Activated CD4-positive, alpha-beta T cell treated with anti-CD3 and anti-CD28 coated beads for 36 hours (primary cell): ENCODE measurements at regions of chr12 and their contacts with region 1.

Region 1: DNA sequence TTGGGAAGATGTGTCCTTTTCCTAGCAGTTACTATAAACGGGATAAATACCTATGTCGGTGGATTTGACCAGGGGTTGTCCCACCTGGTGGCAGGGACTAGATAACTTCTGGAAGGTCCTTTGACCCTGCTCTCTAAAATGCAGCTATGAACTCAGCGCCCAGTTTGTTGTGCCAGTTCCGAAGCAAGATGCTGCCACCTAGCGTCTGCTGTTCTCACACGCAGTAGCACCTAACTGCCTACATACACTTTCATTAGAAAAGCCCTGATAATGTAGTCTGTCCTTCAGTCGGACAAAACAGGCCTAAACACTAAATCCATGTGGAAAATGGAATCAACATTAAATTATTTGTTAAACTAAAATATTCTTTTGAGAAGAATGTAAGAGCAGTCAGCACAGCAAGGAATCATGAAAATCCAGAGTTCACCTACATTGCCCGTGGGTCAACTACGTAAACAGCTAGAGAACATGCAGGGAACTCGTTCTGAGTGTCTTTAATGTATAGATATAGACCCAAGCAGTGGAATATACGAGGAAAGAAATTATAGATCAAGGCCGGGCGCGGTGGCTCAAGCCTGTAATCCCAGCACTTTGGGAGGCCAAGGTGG is 51.1 kb upstream of the CRACR2A start:
- DNase-seq: peak; percentile 84
- ATAC-seq: peak; percentile 87
- H3K4me3 Mint-ChIP-seq: no peak overlapping the region
- H3K27ac Mint-ChIP-seq: no peak overlapping the region
- H3K4me1 Mint-ChIP-seq: peaks cover 13% of the 10 kb centered on the region
- H3K27me3 Mint-ChIP-seq: no peaks in the 10 kb centered on the region

Region 2: DNA sequence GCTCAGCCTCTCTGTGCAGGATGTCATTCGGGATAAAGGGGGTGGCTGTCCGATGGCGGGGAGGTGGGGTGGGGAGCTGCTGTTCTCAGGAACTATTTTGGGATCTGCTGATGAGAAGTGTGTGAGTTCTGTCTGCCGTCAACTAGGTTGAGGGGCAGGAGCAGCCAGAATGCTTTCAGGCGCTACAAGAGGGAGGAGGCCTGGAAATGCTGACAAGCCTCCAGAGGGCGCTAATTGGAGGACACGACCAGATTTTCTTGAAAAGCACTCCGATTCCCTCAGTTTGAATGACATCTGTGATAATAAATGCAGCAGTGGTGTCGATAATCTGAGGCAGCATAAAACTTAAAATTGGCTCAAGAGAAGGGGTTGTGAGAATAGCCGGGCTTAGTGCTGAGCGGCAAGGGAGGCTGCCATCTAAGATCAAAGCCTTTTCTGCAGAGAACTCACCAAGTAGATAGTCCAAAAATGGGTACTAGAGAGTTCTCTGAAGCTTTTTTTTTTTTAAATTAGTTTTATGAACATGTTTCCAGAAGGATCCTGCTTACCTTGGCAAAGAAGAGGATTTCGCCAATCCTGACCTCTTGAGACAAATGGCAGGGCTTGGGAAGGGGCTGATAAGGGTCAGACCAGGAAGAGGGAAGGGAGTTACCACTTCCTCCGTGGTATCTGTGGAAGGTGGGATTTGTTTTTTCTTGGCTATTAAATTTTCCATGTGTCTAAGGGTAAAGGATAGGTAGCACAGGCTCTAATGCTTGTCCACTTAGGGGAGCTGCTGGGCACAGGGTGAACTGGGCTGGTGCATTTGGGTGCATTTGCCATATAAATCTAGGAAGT is 145.4 kb before region 1 on chr12:
- CTCF ChIA-PET with region 1: interaction called, 9 read pairs
- POLR2A ChIA-PET with region 1: no interaction called
- intact Hi-C with region 1: loop called (anchors 1 kb)
- DNase-seq: peak; percentile 63
- ATAC-seq: no peak
- H3K4me3 Mint-ChIP-seq: no peak overlapping the region
- H3K27ac Mint-ChIP-seq: no peak overlapping the region
- H3K4me1 Mint-ChIP-seq: no peaks in the 10 kb centered on the region
- H3K27me3 Mint-ChIP-seq: no peaks in the 10 kb centered on the region

Region 3: GRCh38 chr12:3673981-3674708 is 129.8 kb before region 1 on chr12:
- CTCF ChIA-PET with region 1: interaction called, 12 read pairs
- POLR2A ChIA-PET with region 1: no interaction called
- intact Hi-C with region 1: no loop called
- DNase-seq: no peak
- ATAC-seq: no peak
- H3K4me3 Mint-ChIP-seq: no peak overlapping the region
- H3K27ac Mint-ChIP-seq: no peak overlapping the region
- H3K4me1 Mint-ChIP-seq: peaks cover 7% of the 10 kb centered on the region
- H3K27me3 Mint-ChIP-seq: no peaks in the 10 kb centered on the region